Adrenal gland (tissue), 19 donors: ENCODE measurements at regions of chr1 and their contacts with region 1.

Region 1: GRCh38 chr1:37978541-37978940 is 11.3 kb downstream of the SF3A3 start:
- DNase-seq: no peak
- H3K4me3 ChIP-seq: no peak overlapping the region
- H3K27ac ChIP-seq: no peak overlapping the region
- H3K4me1 ChIP-seq: no peaks in the 10 kb centered on the region
- H3K27me3 ChIP-seq: no peaks in the 10 kb centered on the region
- CTCF ChIP-seq: no peak
- POLR2A ChIP-seq: no peak

Region 2: GRCh38 chr1:37890378-37891014 is 88.0 kb before region 1 on chr1:
- intact Hi-C with region 1: loop called in 1 of 2 experiments (anchors 5 kb)
- DNase-seq: no peak
- H3K4me3 ChIP-seq: no peak overlapping the region
- H3K27ac ChIP-seq: no peak overlapping the region
- H3K4me1 ChIP-seq: no peaks in the 10 kb centered on the region
- H3K27me3 ChIP-seq: no peaks in the 10 kb centered on the region
- CTCF ChIP-seq: peak; percentile 16 to 65 (median 46)
- POLR2A ChIP-seq: no peak